ENCODE measurements at regions of chr4 and their contacts with region 1.

Region 1: GRCh38 chr4:175419239-175419767 is 392.8 kb downstream of the GPM6A start:
- DNase-seq: peak in 1 of 2 experiments; percentile 29
- H3K4me3 ChIP-seq: no peak overlapping the region
- H3K4me3 Mint-ChIP-seq: no peak overlapping the region
- H3K27ac Mint-ChIP-seq: peak overlapping the region; percentile 76
- H3K4me1 ChIP-seq: peaks cover 5% of the 10 kb centered on the region; the same call in 1 of the 2 replicates
- H3K4me1 Mint-ChIP-seq: peaks cover 7% of the 10 kb centered on the region
- H3K27me3 ChIP-seq: no peaks in the 10 kb centered on the region
- H3K27me3 Mint-ChIP-seq: no peaks in the 10 kb centered on the region
- CTCF ChIP-seq: no peak

Region 2: GRCh38 chr4:175443547-175443946 is 24.2 kb after region 1 on chr4:
- CTCF ChIA-PET with region 1: interaction called, 3 read pairs
- POLR2A ChIA-PET with region 1: no interaction called
- intact Hi-C with region 1: loop called (anchors 1 kb)
- DNase-seq: peak in 1 of 2 experiments; percentile 35
- H3K4me3 ChIP-seq: no peak overlapping the region
- H3K4me3 Mint-ChIP-seq: no peak overlapping the region
- H3K27ac Mint-ChIP-seq: no peak overlapping the region
- H3K4me1 ChIP-seq: peaks cover 24% of the 10 kb centered on the region
- H3K4me1 Mint-ChIP-seq: peaks cover 9% of the 10 kb centered on the region
- H3K27me3 ChIP-seq: no peaks in the 10 kb centered on the region
- H3K27me3 Mint-ChIP-seq: no peaks in the 10 kb centered on the region
- CTCF ChIP-seq: no peak

Region 3: DNA sequence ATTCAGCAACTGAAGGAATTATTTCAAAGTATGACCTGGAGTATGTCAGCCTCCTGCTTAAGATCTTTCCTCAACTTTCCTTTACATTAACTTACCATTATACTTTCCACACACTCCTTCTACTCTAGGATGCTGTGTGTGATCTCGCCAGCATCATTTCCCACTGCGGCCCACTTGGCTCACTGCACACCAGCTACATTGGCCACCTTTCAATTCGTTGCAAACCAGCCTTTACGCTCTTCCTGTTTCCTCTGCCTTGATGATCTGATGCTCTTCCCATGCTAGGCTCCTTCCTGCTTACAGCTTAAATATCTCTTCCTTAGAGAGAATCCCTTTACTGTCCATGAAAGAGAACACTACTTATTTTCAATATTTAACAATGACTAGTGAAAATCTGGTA is 297.7 kb after region 1 on chr4:
- CTCF ChIA-PET with region 1: no interaction called
- POLR2A ChIA-PET with region 1: no interaction called
- intact Hi-C with region 1: no loop called
- DNase-seq: no peak
- H3K4me3 ChIP-seq: no peak overlapping the region
- H3K4me3 Mint-ChIP-seq: no peak overlapping the region
- H3K27ac Mint-ChIP-seq: no peak overlapping the region
- H3K4me1 ChIP-seq: no peaks in the 10 kb centered on the region
- H3K4me1 Mint-ChIP-seq: no peaks in the 10 kb centered on the region
- H3K27me3 ChIP-seq: no peaks in the 10 kb centered on the region
- H3K27me3 Mint-ChIP-seq: peaks cover 4% of the 10 kb centered on the region
- CTCF ChIP-seq: no peak

Measured in Caco-2 (cell line).